Cardiac septum (tissue), 1 donor: ENCODE measurements at regions of chr2 and their contacts with region 1.

Region 1: GRCh38 chr2:240851078-240851991 is 17.3 kb upstream of the AGXT start:
- DNase-seq: peak; percentile 92

Region 2: DNA sequence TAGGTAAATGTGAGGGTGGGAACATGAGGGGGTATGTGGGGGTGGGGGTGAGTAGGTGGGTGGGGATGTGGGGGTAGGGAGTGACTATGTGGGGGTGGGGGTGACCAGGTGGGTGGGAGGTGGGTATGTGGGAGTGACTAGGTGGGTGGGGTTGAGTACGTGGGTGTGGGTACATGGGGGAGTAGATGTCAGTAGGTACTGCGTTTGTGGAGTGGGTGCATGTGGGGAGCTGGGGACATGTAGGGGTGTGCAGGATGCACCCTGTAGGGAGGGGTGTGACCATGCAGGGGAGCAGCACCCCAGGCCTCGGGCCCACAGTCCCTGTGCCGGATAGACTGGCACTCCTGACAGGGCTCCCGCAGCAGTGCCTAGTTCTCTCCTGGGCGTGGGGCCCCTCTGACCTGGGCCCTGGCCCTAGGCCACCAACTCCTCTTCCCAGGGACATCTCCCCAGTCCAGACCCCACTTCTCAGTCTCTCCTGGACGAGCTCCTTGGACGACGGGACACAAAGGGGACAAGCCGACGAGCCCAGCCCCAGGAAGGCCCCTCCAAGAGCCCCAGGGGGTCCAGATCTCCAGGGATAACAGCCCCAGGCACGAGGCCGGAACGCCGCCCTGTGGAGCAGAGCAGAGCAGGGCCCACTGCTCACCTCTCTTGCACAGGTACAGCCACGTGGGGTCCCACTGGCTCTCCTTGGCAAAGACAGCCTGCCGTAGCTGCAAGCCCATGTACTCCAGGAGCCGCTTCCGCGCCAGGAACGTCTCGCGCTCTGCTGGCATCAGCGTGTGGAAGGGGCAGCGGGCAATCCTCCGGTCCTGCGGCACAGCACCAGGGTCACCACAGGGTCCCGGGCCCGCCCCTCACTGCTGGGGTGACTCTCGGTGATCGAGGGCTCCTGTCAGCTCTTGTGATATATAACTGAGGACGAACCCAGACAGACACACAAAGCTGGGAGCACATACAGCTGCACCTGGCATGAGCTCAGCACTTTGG is 351.7 kb before region 1 on chr2:
- intact Hi-C with region 1: no loop called
- DNase-seq: no peak

Region 3: GRCh38 chr2:240796543-240797499 is 54.5 kb before region 1 on chr2:
- intact Hi-C with region 1: no loop called
- DNase-seq: peak; percentile 24

Region 4: DNA sequence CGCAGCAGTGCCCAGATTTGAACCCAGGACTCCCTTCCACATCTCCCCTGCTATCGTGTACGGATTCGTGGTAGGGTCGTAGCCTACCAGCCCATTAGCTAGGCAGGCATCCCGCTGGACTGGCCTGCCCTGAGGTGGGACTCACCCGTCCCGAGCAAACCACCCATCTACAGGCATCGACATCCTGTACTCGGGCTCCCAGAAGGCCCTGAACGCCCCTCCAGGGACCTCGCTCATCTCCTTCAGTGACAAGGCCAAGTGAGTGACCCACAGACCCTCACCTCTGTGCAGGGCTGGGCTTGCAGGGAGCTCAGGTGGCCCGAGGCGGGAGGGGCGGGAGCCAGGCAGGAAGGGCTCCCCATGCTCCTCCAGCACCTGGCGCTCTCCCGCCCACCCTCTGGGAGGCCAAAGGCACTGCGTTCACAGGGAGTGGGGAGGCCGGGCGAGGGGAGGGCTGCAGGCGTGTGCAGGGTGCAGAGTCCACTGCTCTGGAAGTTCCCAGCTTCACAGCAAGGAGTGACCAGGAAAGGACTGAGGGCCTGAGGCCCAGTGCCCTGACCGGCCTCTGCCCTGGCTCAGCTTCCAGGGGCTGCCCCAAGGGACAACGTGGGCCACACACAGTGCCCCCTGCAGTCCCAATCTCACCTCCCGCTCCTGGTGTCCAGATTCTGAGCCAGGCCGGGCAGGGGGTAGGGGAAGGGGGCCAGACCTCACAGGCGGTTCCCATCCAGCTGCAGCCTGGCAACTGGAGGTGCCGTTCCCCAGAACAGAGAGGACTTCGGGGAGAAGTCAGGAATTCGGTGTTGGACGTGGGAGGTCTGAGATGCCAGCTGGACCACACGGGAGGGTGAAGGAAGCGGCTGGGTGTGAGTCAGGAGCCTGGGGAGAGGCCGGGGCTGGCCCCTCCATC is 22.7 kb after region 1 on chr2:
- intact Hi-C with region 1: no loop called
- DNase-seq: peak; percentile 62

Region 5: GRCh38 chr2:240893363-240893844 is 42.1 kb after region 1 on chr2:
- intact Hi-C with region 1: no loop called
- DNase-seq: no peak

Region 6: DNA sequence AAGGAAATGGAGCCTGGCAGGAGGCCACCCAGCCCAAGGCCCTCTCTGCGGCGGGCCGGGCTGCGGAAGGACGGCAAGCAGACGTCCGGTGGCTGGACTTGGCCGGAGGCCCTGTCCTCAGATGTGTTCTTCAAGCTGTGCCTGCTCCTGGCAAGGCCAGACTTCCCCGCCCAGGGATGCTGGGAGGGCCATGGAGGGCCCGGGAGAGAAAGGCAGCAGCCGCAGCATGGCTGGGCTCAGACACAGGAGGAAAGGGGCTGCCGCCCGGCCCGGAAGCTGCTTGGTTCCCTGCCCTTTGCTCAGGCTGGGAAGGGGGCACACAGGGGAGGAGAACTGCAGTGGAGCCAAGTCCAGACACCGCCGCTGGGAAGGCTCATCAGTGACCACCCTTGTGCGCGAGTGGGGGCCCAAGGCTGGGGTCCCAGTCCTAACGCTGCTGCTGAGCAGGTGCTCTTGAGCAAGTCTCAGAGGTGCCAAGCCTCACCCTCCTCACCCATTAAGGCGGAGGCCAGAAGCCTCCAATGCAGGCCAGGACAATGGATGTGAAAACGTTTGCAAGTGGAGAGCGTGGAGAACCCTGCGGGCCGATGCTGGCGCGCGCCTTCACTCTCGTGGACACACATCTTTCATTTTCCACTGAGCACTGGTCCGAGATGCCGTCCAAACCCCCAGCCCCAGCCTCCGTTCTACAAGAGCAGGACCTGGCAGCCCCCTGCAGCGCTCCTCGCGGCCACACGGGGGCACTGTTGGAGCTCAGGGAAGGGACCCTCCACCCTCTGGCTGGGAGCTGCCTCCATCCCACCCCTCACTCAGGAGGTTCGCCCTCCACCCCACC is 62.7 kb after region 1 on chr2:
- intact Hi-C with region 1: loop called (anchors 5 kb)
- DNase-seq: peak; percentile 87

Region 7: DNA sequence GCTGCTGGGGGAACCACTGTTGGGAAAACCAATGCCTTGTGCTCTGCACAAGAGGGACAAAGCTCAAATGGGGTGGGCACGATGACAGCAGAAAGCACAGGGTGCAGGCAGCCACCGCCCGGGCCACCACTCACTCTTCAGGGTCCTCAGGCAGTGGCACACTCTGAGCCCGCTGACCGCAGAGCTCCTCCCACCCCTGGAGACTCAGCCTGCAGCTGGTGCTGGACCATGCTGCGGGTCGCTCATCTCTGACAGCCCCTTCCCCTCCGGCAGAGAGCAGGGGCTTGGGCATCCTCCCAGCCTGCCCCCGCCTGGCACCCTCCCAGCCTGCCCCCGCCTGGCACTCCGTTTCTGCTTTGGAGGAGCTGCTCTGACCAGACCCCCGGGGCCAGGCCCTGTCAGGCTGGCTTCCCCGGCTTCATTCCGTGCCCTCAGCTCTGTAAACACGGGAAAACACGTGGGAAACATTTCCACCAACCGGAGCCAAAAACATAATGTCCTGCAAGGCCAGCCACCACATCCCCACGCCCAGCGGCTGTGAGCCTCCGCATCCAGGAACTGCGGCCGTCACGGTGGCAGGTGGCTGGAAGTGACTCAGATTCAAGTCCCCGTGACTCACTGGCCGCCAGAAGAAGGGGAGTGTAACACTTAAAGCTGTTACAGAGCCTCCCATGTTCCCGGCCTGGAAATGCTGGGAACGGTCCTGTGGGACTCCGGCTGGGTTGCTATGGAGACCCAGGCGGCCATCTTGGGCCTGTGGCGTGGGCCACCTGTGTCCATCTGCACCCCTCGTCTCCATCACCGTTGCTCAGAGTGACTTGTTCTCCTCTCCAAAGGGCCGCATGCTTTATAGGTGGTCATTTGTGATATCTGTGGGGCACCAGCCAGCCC is 140.3 kb after region 1 on chr2:
- intact Hi-C with region 1: loop called (anchors 5 kb)
- DNase-seq: peak; percentile 88

Region 8: GRCh38 chr2:241074901-241075540 is 223.7 kb after region 1 on chr2:
- intact Hi-C with region 1: loop called (anchors 5 kb)
- DNase-seq: no peak